Transverse colon (tissue), 4 donors: ENCODE measurements at regions of chr15 and their contacts with region 1.

Region 1: GRCh38 chr15:52540374-52541012 is 11.8 kb upstream of the MYO5A start:
- DNase-seq: no peak
- H3K4me3 ChIP-seq: no peak overlapping the region
- H3K27ac ChIP-seq: no peak overlapping the region
- H3K4me1 ChIP-seq: no peaks in the 10 kb centered on the region
- H3K27me3 ChIP-seq: peaks cover 2% of the 10 kb centered on the region
- CTCF ChIP-seq: no peak
- EP300 ChIP-seq: no peak
- POLR2A ChIP-seq: no peak

Region 2: GRCh38 chr15:52191207-52191606 is 349.3 kb before region 1 on chr15 and contains the start of gene GNB5:
- in situ Hi-C with region 1: no loop called
- intact Hi-C with region 1: no loop called
- DNase-seq: no peak
- H3K4me3 ChIP-seq: no peak within 1 kb of the TSS
- H3K27ac ChIP-seq: no peak within 1 kb of the TSS
- H3K4me1 ChIP-seq: no peaks in the 10 kb centered on the region
- H3K27me3 ChIP-seq: no peaks in the 10 kb centered on the region
- CTCF ChIP-seq: no peak
- EP300 ChIP-seq: no peak
- POLR2A ChIP-seq: no peak
- total RNA-seq, gene GNB5: 0.60 to 12.7 (median 7.8) TPM

Region 3: DNA sequence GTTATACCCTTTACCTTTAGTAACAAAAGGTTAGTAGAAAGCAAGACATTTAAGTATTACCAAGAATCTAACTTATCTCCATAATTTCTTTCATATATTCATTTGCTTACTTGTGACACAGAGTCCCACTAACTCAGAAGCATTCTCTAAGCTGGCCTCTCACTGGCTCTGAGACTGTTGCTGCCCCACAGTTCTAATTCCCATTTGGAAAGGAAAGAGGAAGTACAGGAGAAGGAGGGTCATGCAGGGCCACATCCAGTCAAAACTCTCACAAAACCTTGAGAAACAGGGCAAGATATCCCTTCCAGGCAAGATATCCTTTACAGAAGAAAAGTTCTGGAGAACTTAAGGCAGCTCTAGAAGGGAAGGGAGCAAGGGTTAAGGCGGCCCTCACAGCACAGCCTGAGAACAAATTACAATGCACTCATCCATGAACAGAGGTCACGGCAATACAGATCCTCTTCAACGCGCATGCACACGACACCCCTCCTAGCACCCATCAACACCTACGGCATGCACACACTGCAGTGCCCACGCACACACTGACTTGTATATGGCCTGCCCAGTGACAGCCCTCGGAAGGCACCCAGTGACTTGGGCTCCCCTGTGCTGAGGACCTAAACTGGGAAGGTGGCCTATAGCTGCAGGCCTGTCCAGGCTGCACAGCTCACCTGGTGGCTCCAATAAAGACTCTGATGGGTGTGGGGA is 231.9 kb before region 1 on chr15:
- in situ Hi-C with region 1: no loop called
- intact Hi-C with region 1: no loop called
- DNase-seq: no peak
- H3K4me3 ChIP-seq: no peak overlapping the region
- H3K27ac ChIP-seq: no peak overlapping the region
- H3K4me1 ChIP-seq: no peaks in the 10 kb centered on the region
- H3K27me3 ChIP-seq: no peaks in the 10 kb centered on the region
- CTCF ChIP-seq: no peak
- EP300 ChIP-seq: no peak
- POLR2A ChIP-seq: no peak

Region 4: GRCh38 chr15:52427804-52428203 is 112.7 kb before region 1 on chr15:
- in situ Hi-C with region 1: no loop called
- intact Hi-C with region 1: no loop called
- DNase-seq: no peak
- H3K4me3 ChIP-seq: no peak overlapping the region
- H3K27ac ChIP-seq: no peak overlapping the region
- H3K4me1 ChIP-seq: no peaks in the 10 kb centered on the region
- H3K27me3 ChIP-seq: no peaks in the 10 kb centered on the region
- CTCF ChIP-seq: no peak
- EP300 ChIP-seq: no peak
- POLR2A ChIP-seq: no peak

Region 5: GRCh38 chr15:52509500-52510245 is 30.8 kb before region 1 on chr15:
- in situ Hi-C with region 1: no loop called
- intact Hi-C with region 1: loop called (anchors 1 kb)
- DNase-seq: no peak
- H3K4me3 ChIP-seq: no peak overlapping the region
- H3K27ac ChIP-seq: no peak overlapping the region
- H3K4me1 ChIP-seq: peaks cover 0 to 9% (median 0%) of the 10 kb centered on the region in 4 donors
- H3K27me3 ChIP-seq: no peaks in the 10 kb centered on the region
- CTCF ChIP-seq: no peak
- EP300 ChIP-seq: no peak
- POLR2A ChIP-seq: no peak

Region 6: DNA sequence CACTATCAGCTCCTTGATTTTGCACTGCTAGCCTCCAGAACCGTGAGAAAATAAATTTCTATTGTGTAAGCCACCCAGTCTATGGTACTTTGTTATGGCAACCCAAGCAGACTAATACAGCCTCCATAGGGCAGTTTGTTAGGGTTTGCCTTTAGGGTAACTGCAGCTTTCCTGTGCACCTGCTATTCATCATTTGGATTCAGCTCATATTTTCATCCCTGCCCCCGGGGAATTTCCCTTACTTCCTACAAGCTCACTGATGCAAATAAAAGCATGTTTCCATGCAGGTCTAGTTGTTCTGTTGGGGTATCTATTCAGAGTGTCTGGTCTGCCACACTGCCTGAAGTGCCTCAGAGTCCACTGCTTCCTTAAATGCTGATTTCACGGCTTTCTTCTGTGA is 187.3 kb after region 1 on chr15:
- in situ Hi-C with region 1: no loop called
- intact Hi-C with region 1: no loop called
- DNase-seq: no peak
- H3K4me3 ChIP-seq: no peak overlapping the region
- H3K27ac ChIP-seq: no peak overlapping the region
- H3K4me1 ChIP-seq: peaks cover 0 to 13% (median 4%) of the 10 kb centered on the region in 4 donors
- H3K27me3 ChIP-seq: no peaks in the 10 kb centered on the region
- CTCF ChIP-seq: no peak
- EP300 ChIP-seq: no peak
- POLR2A ChIP-seq: no peak